ENCODE measurements at regions of chr16 and their contacts with region 1.

Region 1: GRCh38 chr16:788394-789126 is at the start of gene CHTF18:
- DNase-seq: peak; percentile 83 to 89
- ATAC-seq: peak; percentile 94 to 96
- H3K4me3 ChIP-seq: peak within 1 kb of the TSS; percentile 70 to 85 (median 82)
- H3K27ac ChIP-seq: peak within 1 kb of the TSS; percentile 50 to 77 (median 64)
- H3K4me1 ChIP-seq: peaks cover 5 to 16% of the 10 kb centered on the region in 2 donors
- H3K27me3 ChIP-seq: peaks cover 4 to 6% (median 6%) of the 10 kb centered on the region in 3 donors
- CTCF ChIP-seq: no peak
- POLR2A ChIP-seq: peak in 1 of 2 donors; percentile 38
- total RNA-seq, gene CHTF18: 0.44 to 5.8 (median 3.1) TPM

Region 2: GRCh38 chr16:711548-712320 is 76.8 kb before region 1 on chr16:
- in situ Hi-C with region 1: no loop called
- intact Hi-C with region 1: loop called (anchors 1 kb)
- DNase-seq: peak; percentile 37 to 60
- ATAC-seq: peak in 1 of 2 donors; percentile 46
- H3K4me3 ChIP-seq: no peak overlapping the region
- H3K27ac ChIP-seq: no peak overlapping the region
- H3K4me1 ChIP-seq: peaks cover 11 to 14% of the 10 kb centered on the region in 2 donors
- H3K27me3 ChIP-seq: peaks cover 43 to 45% (median 44%) of the 10 kb centered on the region in 3 donors
- CTCF ChIP-seq: peak; percentile 73 to 95 (median 94)
- POLR2A ChIP-seq: no peak

Region 3: GRCh38 chr16:720990-721764 is 67.4 kb before region 1 on chr16 and contains the start of gene ANTKMT:
- in situ Hi-C with region 1: no loop called
- intact Hi-C with region 1: loop called (anchors 2 kb)
- DNase-seq: peak; percentile 68 to 83
- ATAC-seq: peak; percentile 90
- H3K4me3 ChIP-seq: peak within 1 kb of the TSS; percentile 76 to 99 (median 83)
- H3K27ac ChIP-seq: peak within 1 kb of the TSS; percentile 86 to 95 (median 90)
- H3K4me1 ChIP-seq: peaks cover 15 to 30% of the 10 kb centered on the region in 2 donors
- H3K27me3 ChIP-seq: peaks cover 6 to 14% (median 11%) of the 10 kb centered on the region in 3 donors
- CTCF ChIP-seq: peak in 2 of 5 experiments; percentile 19 to 34
- POLR2A ChIP-seq: peak; percentile 70 to 71
- total RNA-seq, gene ANTKMT: 20.9 to 84.0 (median 38.7) TPM

Region 4: DNA sequence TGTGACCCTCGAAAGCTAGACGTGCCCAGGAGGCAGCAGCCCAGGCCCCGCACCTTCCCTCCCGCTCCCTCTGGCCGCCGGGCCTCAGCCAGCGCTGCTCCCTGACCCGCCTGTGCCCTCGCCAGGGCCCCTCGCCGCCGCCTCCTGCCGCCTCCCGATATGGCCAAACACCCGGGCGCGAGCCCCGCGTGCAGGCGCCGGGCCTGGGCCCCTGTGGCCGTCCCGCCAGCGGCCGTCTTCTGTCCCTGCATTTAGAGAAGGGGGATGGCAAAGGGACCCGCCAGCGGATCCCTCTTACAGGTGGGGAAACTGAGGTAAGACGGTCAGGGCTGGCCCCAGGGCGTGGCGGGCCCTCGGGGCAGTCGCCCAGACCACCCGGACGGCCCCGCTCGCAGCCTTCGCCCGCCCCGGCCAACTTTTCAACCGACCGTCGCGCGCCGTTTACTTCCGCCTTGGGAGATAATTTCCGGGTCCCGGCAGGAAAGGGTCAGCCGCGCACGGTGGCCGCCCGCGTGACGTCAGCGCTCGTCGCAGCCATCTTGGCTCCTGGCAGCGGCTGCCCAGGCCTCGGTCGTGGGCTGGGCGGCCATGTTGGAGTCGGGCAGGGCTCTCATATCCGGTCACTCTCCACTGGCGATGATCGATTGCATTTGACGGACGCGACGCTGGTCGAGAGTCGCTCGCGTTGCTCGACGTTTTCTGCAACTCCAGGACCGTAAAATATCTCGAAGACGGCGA is 19.0 kb after region 1 on chr16:
- in situ Hi-C with region 1: no loop called
- intact Hi-C with region 1: loop called (anchors 1 kb)
- DNase-seq: peak; percentile 58 to 81
- ATAC-seq: peak; percentile 73 to 88
- H3K4me3 ChIP-seq: peak overlapping the region; percentile 62 to 74 (median 66)
- H3K27ac ChIP-seq: peak overlapping the region; percentile 74 to 87 (median 78)
- H3K4me1 ChIP-seq: no peaks in the 10 kb centered on the region
- H3K27me3 ChIP-seq: peaks cover 24 to 40% (median 39%) of the 10 kb centered on the region in 3 donors
- CTCF ChIP-seq: no peak
- POLR2A ChIP-seq: peak; percentile 41 to 42

Measured in gastrocnemius medialis (tissue), 4 donors.